Activated CD4-positive, alpha-beta T cell treated with anti-CD3 and anti-CD28 coated beads for 36 hours (primary cell): ENCODE measurements at regions of chr5 and their contacts with region 1.

Region 1: GRCh38 chr5:132829742-132830435 is 558 bp downstream of the SHROOM1 start:
- DNase-seq: peak; percentile 86
- ATAC-seq: peak; percentile 87
- H3K4me3 Mint-ChIP-seq: peak overlapping the region; percentile 70
- H3K27ac Mint-ChIP-seq: no peak overlapping the region
- H3K4me1 Mint-ChIP-seq: peaks cover 2% of the 10 kb centered on the region
- H3K27me3 Mint-ChIP-seq: peaks cover 38% of the 10 kb centered on the region

Region 2: DNA sequence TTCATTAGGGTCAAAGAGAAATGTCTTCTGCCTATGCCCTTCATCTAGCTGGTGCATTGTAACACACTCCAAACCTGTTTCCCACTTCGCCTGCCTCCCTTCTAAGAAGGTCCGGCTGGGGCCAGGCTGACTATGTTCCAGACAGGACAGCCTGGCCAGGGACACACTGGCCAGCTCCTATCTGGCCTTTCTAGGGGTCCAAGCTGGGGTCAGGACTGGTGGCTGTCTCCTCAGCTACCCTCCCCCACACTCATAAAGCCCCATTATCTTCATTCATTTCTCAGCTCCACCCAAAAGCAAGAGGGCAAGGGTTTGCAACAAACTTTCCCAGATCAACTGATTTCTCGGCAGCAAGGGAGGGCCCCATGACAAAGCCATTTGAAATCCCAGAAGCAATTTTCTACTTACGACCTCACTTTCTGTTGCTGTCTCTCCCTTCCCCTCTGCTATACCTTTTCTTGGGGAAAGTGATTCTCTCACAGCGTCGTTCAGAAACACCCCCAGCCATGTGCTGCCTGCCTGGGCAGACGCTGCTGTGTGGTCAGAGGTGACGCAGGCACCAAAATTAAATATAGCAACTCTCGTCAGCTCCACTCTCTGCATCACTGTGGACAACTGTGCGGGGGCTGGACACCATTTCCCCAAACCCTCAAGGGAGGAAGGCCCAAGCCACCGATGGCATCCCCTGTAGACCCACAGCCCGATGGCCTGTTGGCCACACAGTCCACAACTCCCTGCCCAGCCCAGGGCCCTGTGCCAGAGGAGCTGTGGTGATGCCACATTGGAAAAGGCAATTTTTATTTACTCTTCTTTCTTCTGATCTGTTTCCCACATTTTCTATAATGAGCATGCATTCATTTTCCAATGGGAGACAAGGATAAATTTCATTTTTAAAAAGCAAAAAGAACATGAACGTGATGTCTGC is 165.9 kb before region 1 on chr5:
- CTCF ChIA-PET with region 1: no interaction called
- POLR2A ChIA-PET with region 1: no interaction called
- intact Hi-C with region 1: no loop called
- DNase-seq: peak; percentile 44
- ATAC-seq: peak; percentile 24
- H3K4me3 Mint-ChIP-seq: no peak overlapping the region
- H3K27ac Mint-ChIP-seq: peak overlapping the region; percentile 87
- H3K4me1 Mint-ChIP-seq: peaks cover 34% of the 10 kb centered on the region
- H3K27me3 Mint-ChIP-seq: no peaks in the 10 kb centered on the region

Region 3: DNA sequence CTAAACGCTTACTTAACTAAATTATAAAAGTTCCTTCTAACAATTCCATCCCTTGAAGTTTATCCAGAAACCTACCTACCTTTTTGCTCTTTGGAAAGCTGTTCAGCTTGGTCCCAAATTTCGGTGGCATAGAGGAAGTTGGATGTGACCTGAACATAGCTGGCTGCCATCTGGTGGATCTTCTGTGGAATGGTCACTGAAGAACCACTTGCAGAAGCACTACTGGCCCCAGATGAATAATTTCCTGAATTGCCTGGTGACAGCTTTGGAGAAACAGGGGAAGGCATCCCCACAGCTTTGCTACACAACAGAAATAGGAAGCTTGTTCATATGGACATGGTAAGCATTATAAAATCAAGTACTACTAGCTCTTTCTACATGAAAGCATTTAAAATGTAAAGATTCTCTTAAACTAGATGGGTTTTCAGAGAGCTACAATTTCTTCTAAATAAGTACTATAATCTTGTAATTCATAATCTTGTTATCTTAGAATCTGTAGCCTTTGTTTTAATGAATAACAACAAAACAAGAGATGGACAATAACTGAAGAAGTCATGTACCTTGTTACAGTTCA is 53.5 kb after region 1 on chr5:
- CTCF ChIA-PET with region 1: interaction called, 10 read pairs
- POLR2A ChIA-PET with region 1: no interaction called
- intact Hi-C with region 1: loop called (anchors 1 kb)
- DNase-seq: peak; percentile 34
- ATAC-seq: peak; percentile 72
- H3K4me3 Mint-ChIP-seq: no peak overlapping the region
- H3K27ac Mint-ChIP-seq: no peak overlapping the region
- H3K4me1 Mint-ChIP-seq: peaks cover 5% of the 10 kb centered on the region
- H3K27me3 Mint-ChIP-seq: no peaks in the 10 kb centered on the region

Region 4: DNA sequence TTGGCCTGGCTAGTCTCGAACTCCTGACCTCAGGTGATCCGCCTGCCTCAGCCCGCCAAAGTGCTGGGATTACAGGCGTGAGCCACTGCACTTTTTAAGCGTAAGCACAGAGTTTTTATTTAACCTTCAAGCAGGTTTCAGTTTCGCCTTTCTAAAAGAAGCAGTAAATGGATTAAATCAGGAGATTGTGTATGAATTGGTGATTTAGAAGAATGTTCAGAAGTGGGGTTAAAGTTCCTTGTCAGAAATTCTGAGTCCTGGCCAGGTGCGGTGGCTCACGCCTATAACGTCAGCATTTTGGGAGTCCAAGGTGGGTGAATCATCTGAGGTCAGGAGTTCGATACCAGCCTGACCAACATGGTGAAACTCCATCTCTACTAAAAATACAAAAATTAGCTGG is 234.1 kb after region 1 on chr5:
- CTCF ChIA-PET with region 1: no interaction called
- POLR2A ChIA-PET with region 1: interaction called, 10 read pairs
- intact Hi-C with region 1: no loop called
- DNase-seq: no peak
- ATAC-seq: no peak
- H3K4me3 Mint-ChIP-seq: no peak overlapping the region
- H3K27ac Mint-ChIP-seq: no peak overlapping the region
- H3K4me1 Mint-ChIP-seq: peaks cover 24% of the 10 kb centered on the region
- H3K27me3 Mint-ChIP-seq: no peaks in the 10 kb centered on the region